ENCODE measurements at regions of chr21 and their contacts with region 1.

Region 1: GRCh38 chr21:31665397-31665796 is 5.9 kb downstream of the SOD1 start:
- DNase-seq: peak; percentile 20
- ATAC-seq: peak; percentile 72
- H3K4me3 ChIP-seq: no peak overlapping the region
- H3K27ac ChIP-seq: no peak overlapping the region
- H3K4me1 ChIP-seq: peaks cover 57% of the 10 kb centered on the region
- H3K27me3 ChIP-seq: no peaks in the 10 kb centered on the region; a peak in 1 of 5 replicates
- CTCF ChIP-seq: 0 out of 2 replicates have a peak, but pooled peaks have one; percentile 9
- EP300 ChIP-seq: no peak
- POLR2A ChIP-seq: no peak
- RAD21 ChIP-seq: no peak

Region 2: DNA sequence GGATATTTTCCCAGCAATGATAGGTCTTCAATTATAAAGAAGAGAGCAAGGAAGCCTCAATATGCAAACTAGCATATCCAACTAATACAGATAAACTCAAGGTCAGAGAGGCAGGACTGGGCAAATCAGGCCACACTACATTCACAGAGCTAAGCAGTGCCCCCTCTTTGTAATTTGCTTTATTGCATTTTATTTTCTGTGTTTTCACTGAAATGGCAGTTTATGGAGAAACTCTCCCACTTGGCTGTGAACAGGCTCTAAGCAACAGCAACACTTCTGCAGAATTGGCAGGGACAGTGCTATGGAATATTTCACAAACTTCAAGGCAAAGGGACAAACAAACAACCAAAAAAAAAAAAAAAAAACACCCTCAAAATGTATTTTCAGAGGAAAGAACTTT is 99.3 kb before region 1 on chr21:
- CTCF ChIA-PET with region 1: no interaction called
- POLR2A ChIA-PET with region 1: no interaction called
- in situ Hi-C with region 1: no loop called
- intact Hi-C with region 1: no loop called
- DNase-seq: no peak
- ATAC-seq: peak; percentile 55
- H3K4me3 ChIP-seq: no peak overlapping the region
- H3K27ac ChIP-seq: no peak overlapping the region
- H3K4me1 ChIP-seq: no peaks in the 10 kb centered on the region
- H3K27me3 ChIP-seq: peaks cover 0 to 1% of the 10 kb centered on the region in 2 experiments; a peak in 2 of 5 replicates
- CTCF ChIP-seq: no peak
- EP300 ChIP-seq: no peak
- POLR2A ChIP-seq: no peak
- RAD21 ChIP-seq: no peak

Region 3: GRCh38 chr21:31629972-31630711 is 35.3 kb before region 1 on chr21:
- CTCF ChIA-PET with region 1: no interaction called
- POLR2A ChIA-PET with region 1: no interaction called
- in situ Hi-C with region 1: no loop called
- intact Hi-C with region 1: no loop called
- DNase-seq: peak; percentile 3
- ATAC-seq: no peak; the same call in 2 of the 3 replicates
- H3K4me3 ChIP-seq: no peak overlapping the region
- H3K27ac ChIP-seq: no peak overlapping the region
- H3K4me1 ChIP-seq: peaks cover 2% of the 10 kb centered on the region
- H3K27me3 ChIP-seq: no peaks in the 10 kb centered on the region
- CTCF ChIP-seq: no peak
- EP300 ChIP-seq: no peak
- POLR2A ChIP-seq: no peak
- RAD21 ChIP-seq: no peak

Region 4: DNA sequence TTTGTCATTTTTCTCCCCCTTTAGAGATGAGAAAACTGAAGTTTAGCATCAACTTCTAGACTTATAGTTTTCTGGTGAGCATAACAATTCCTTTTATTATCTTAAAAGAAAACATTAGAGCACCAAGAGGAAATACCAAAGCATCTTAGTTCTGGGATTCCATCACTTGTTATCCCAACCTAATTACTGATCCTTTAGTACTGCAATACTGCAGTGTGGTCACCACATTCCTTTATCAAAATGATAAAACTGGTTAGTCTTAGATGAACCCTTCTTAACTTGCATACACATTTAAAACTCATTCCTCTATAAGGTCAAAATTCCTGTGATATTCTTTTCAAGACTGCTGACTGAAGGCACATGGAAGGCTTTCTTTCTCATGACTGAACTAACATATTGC is 17.2 kb after region 1 on chr21:
- CTCF ChIA-PET with region 1: no interaction called
- POLR2A ChIA-PET with region 1: no interaction called
- in situ Hi-C with region 1: no loop called
- intact Hi-C with region 1: no loop called
- DNase-seq: no peak
- ATAC-seq: no peak
- H3K4me3 ChIP-seq: no peak overlapping the region
- H3K27ac ChIP-seq: no peak overlapping the region
- H3K4me1 ChIP-seq: no peaks in the 10 kb centered on the region
- H3K27me3 ChIP-seq: no peaks in the 10 kb centered on the region
- CTCF ChIP-seq: no peak
- EP300 ChIP-seq: no peak
- POLR2A ChIP-seq: no peak
- RAD21 ChIP-seq: no peak

Region 5: DNA sequence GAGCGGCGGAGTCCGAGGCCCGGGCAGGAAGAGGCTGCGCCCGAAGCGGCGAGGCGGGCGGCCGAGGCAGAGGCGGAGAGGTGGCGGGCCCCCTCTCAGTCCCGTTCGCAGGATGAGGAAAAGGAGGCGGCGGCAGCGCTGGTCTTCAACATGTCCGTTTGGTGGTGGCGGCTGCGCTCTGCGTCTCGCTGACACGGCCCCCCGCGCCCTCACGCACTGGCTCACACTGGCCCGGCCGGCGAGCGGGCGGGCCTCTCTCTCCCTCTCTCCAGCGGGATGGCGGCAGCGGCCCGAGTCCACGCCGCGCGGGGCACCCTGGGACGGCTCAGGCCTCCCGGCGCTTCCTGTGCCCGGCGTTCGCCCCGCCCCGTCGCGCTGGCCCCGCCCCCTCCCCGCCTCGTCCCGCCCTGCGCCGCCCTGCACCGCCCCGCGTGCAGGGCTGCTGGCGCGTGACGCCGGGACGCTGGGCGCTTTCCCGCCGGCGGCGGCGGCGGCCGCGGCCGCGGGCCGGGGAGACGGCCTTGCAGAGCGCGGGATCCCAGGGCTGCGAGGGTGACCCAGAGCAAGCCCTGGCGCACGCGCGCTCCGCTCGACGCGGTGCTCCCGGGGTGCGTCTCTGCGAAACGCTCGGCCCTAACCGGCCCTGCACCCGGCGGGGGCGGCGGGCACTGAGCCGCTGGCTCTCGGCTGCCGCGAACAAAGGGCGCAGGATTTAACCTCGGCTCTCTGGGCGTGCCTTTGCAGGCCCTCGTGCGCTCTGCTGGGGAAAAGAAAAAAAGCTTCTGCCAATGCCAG is 66.6 kb after region 1 on chr21 and contains the start of gene SCAF4:
- CTCF ChIA-PET with region 1: no interaction called
- POLR2A ChIA-PET with region 1: no interaction called
- in situ Hi-C with region 1: no loop called
- intact Hi-C with region 1: loop called (anchors 5 kb)
- DNase-seq: peak; percentile 77
- ATAC-seq: peak; percentile 90
- H3K4me3 ChIP-seq: peak within 1 kb of the TSS; percentile 96
- H3K27ac ChIP-seq: peak within 1 kb of the TSS; percentile 98
- H3K4me1 ChIP-seq: peaks cover 46% of the 10 kb centered on the region
- H3K27me3 ChIP-seq: no peaks in the 10 kb centered on the region; a peak in 1 of 5 replicates
- CTCF ChIP-seq: no peak
- EP300 ChIP-seq: no peak
- POLR2A ChIP-seq: peak; percentile 81 to 83
- RAD21 ChIP-seq: peak; percentile 52
- total RNA-seq, gene SCAF4: 7.8 and 9.1 TPM in 2 replicates

Region 6: GRCh38 chr21:32001390-32001789 is 336.0 kb after region 1 on chr21:
- CTCF ChIA-PET with region 1: no interaction called
- POLR2A ChIA-PET with region 1: no interaction called
- in situ Hi-C with region 1: no loop called
- intact Hi-C with region 1: no loop called
- DNase-seq: peak; percentile 76
- ATAC-seq: peak; percentile 91
- H3K4me3 ChIP-seq: no peak overlapping the region
- H3K27ac ChIP-seq: peak overlapping the region; percentile 11
- H3K4me1 ChIP-seq: peaks cover 16% of the 10 kb centered on the region
- H3K27me3 ChIP-seq: no peaks in the 10 kb centered on the region
- CTCF ChIP-seq: no peak
- EP300 ChIP-seq: 0 out of 4 replicates have a peak, but pooled peaks of 1 of the 2 experiments have one; percentile 7
- POLR2A ChIP-seq: no peak
- RAD21 ChIP-seq: no peak

Measured in HepG2 (cell line).